Ascending aorta (tissue), 2 donors: ENCODE measurements at regions of chr12 and their contacts with region 1.

Region 1: DNA sequence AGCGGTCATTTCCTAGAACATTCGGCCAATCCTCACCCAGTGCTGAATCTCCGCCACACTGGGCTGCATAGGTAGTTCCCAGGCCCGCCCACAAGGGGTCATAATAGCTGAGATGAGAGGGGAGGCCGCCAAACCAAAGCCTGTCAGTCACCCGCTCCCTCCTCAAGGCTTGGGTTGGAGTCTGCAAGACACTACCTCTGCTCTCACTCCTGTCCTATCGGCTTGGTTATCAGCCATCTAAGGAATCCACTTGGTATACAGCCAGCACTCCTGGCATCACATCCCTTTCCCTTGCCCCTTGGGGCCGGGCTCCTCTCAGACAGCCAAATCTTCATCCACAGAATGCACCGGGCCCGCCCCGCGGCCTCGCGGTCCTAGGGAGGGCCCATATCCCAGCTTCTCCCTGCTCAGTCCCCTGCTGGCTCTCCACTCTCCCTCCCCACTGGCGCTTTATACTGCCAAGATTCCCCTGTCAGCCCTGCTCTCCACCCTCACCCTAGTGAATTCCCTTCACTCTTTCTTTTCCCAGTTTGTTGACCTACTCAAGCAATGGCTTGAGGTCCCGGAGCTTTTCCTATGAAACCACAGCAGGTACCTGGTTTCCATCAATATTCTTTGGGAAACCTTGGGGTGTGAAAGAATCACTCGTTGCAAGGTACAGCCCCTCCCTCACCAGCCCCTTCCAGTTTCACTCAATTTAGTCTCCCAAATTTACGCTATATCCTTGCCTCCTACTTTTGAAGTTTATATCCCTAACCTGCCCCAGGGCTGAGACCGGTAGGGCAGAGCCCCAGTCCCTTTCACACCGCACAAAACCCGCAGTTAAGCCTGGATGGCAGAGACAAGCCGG is 1.4 kb downstream of the IFFO1 start:
- DNase-seq: peak in 1 of 2 donors; percentile 90
- H3K4me3 ChIP-seq: peak overlapping the region; percentile 70 to 82
- H3K27ac ChIP-seq: peak overlapping the region; percentile 98 to 99
- H3K4me1 ChIP-seq: peaks cover 20 to 55% of the 10 kb centered on the region in 2 donors
- H3K27me3 ChIP-seq: no peaks in the 10 kb centered on the region
- CTCF ChIP-seq: peak; percentile 19 to 63 (median 53)

Region 2: GRCh38 chr12:6423267-6424007 is 131.0 kb before region 1 on chr12:
- intact Hi-C with region 1: loop called (anchors 5 kb)
- DNase-seq: peak; percentile 46 to 92
- H3K4me3 ChIP-seq: no peak overlapping the region
- H3K27ac ChIP-seq: no peak overlapping the region
- H3K4me1 ChIP-seq: peaks cover 0 to 4% of the 10 kb centered on the region in 2 donors
- H3K27me3 ChIP-seq: no peaks in the 10 kb centered on the region
- CTCF ChIP-seq: peak; percentile 85 to 92 (median 90)

Region 3: DNA sequence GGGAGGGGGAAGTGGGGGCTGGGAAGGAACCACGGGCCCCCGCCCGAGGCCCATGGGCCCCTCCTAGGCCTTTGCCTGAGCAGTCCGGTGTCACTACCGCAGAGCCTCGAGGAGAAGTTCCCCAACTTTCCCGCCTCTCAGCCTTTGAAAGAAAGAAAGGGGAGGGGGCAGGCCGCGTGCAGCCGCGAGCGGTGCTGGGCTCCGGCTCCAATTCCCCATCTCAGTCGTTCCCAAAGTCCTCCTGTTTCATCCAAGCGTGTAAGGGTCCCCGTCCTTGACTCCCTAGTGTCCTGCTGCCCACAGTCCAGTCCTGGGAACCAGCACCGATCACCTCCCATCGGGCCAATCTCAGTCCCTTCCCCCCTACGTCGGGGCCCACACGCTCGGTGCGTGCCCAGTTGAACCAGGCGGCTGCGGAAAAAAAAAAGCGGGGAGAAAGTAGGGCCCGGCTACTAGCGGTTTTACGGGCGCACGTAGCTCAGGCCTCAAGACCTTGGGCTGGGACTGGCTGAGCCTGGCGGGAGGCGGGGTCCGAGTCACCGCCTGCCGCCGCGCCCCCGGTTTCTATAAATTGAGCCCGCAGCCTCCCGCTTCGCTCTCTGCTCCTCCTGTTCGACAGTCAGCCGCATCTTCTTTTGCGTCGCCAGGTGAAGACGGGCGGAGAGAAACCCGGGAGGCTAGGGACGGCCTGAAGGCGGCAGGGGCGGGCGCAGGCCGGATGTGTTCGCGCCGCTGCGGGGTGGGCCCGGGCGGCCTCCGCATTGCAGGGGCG is 20.3 kb before region 1 on chr12 and contains the start of gene GAPDH:
- intact Hi-C with region 1: loop called (anchors 1 kb)
- DNase-seq: peak; percentile 52 to 94
- H3K4me3 ChIP-seq: peak within 1 kb of the TSS; percentile 79 to 98
- H3K27ac ChIP-seq: peak within 1 kb of the TSS; percentile 98 to 99
- H3K4me1 ChIP-seq: peaks cover 19 to 30% of the 10 kb centered on the region in 2 donors
- H3K27me3 ChIP-seq: no peaks in the 10 kb centered on the region
- CTCF ChIP-seq: no peak
- total RNA-seq, gene GAPDH: 3,445 TPM

Region 4: GRCh38 chr12:6607751-6608591 is 53.6 kb after region 1 on chr12:
- intact Hi-C with region 1: loop called (anchors 1 kb)
- DNase-seq: peak in 1 of 2 donors; percentile 86
- H3K4me3 ChIP-seq: no peak overlapping the region
- H3K27ac ChIP-seq: peak overlapping the region; percentile 73 to 99
- H3K4me1 ChIP-seq: peaks cover 26 to 34% of the 10 kb centered on the region in 2 donors
- H3K27me3 ChIP-seq: no peaks in the 10 kb centered on the region
- CTCF ChIP-seq: no peak

Region 5: DNA sequence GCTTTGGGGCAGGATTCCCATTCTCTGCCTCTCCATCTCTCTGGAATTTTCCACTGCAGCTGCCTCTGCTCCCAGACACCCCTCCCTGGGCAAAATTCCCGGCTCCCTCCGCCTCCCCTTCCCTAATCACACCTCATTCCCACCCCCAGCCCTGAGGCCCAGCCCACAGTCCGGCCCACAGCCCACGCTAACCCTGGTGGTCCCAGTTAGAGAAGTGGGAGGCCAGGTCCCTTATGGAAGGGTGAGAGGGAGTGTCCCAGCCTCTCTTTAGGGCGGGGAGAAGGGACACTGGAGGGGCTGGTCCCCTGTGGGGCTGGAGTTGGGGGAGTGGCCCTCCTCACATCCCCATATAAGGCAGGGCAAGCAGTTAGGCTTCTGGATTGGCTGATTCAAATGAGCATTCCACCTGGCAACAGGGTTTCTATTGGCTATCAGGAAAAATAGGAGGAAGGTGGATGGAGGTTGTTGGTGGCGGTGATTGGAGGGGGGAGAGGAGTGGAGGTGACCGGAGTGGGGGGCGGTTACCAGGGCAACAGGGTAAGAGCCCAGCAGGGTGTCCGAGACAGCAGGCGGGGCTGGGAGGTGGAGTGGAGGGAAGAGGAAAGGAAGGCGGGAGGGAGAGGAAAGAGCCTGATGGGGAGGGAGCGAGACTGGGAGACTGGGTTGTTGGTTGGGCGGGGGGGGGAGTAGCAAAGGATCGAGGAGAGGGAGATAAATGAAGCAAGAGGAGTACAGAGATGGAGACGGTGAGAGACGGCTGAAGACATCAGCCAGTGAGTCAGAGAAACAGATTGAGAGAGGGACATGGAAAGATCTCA is 209.8 kb after region 1 on chr12:
- intact Hi-C with region 1: loop called (anchors 5 kb)
- DNase-seq: peak; percentile 85 to 96
- H3K4me3 ChIP-seq: peak overlapping the region; percentile 96 to 97
- H3K27ac ChIP-seq: peak overlapping the region; percentile 84 to 97
- H3K4me1 ChIP-seq: peaks cover 10 to 29% of the 10 kb centered on the region in 2 donors
- H3K27me3 ChIP-seq: no peaks in the 10 kb centered on the region
- CTCF ChIP-seq: no peak